ENCODE measurements at regions of chr4 and their contacts with region 1.

Region 1: DNA sequence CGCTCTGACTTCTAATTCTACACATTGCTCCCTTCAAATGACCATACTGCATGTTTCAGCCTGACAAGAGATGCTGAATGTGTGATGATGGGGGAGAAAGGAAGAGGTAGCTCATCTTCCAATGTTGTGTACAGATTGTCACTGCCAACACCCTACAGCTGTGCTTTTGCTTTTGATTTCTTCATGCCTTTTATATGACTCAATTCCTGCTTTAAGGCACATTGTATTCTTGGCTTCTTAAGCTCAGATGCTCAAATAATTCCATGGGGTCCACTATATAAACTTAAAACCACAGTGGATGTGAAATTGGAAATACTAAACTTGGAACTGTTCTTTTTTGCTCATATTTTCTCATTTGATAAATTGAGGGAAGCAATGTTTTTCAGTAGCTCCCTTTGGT is 183.2 kb upstream of the WDFY3 start:
- DNase-seq: no peak
- H3K4me3 ChIP-seq: no peak overlapping the region
- H3K27ac ChIP-seq: no peak overlapping the region
- H3K4me1 ChIP-seq: no peaks in the 10 kb centered on the region
- H3K27me3 ChIP-seq: no peaks in the 10 kb centered on the region
- CTCF ChIP-seq: no peak
- POLR2A ChIP-seq: no peak

Region 2: GRCh38 chr4:85358831-85359470 is 209.3 kb after region 1 on chr4:
- intact Hi-C with region 1: no loop called
- DNase-seq: no peak
- H3K4me3 ChIP-seq: no peak overlapping the region
- H3K27ac ChIP-seq: no peak overlapping the region
- H3K4me1 ChIP-seq: no peaks in the 10 kb centered on the region
- H3K27me3 ChIP-seq: no peaks in the 10 kb centered on the region
- CTCF ChIP-seq: no peak
- POLR2A ChIP-seq: no peak

Region 3: DNA sequence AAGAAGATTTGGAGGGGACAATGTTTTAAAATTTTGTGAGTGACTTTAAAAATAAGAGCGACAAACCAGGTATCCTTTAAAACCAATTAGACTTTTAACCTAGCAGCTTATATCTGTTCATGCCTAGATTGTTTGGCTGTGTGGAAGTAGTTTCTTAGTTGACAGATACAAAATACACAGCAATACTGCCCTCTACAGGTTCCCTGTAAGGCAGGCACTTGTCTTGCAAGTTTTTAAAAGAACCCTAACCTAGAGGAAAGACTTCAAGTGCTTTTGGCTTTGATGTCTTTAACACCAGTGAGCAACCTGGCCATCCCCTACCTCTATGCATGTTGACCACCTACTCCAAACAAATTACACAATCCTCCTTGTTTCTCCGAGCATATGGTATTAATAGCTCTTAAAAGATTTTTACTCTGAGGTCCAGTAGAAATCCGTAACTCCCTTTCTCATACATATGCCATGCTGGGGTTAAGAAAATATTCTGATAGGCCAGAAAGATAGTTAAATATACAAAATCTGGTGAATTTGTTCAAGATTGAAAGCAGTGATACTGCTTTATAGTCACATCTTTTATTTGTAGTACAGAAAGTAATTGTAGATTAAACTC is 598.3 kb after region 1 on chr4:
- intact Hi-C with region 1: loop called (anchors 5 kb)
- DNase-seq: peak; percentile 27 to 36
- H3K4me3 ChIP-seq: no peak overlapping the region
- H3K27ac ChIP-seq: no peak overlapping the region
- H3K4me1 ChIP-seq: no peaks in the 10 kb centered on the region
- H3K27me3 ChIP-seq: no peaks in the 10 kb centered on the region
- CTCF ChIP-seq: peak; percentile 18 to 86 (median 71)
- POLR2A ChIP-seq: no peak

Measured in thyroid gland (tissue), 4 donors.